ENCODE measurements at regions of chr22 and their contacts with region 1.

Region 1: DNA sequence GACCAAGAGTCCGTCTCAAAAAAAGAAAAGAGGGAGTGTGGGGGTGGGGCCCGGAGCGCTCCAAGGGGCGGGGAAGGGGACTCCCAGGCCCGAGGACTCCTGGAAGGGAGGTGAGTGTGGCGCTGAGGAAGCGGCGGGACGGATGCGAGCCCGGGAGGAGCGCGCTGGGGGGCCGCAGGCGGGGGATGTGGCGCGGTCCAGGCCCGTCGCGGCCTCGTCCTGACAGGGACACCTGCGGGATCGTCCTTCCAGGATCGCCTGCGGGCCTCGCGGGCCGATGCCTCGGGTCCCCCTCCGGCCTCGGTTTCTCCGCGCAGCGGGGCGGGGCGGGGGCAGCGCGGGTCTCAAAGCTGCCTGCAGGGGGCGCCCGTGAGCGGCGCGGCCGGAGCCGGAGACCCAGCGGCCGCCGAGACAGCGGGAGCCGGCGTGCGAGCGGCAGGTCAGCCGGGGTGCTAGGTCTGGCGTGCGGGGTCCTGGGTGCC is 3.8 kb upstream of the ADORA2A start:
- DNase-seq: peak in 1 of 2 donors; percentile 66
- ATAC-seq: peak; percentile 63

Region 2: GRCh38 chr22:24516301-24516737 is 92.8 kb after region 1 on chr22:
- intact Hi-C with region 1: loop called in 1 of 2 experiments (anchors 10 kb)
- DNase-seq: no peak
- ATAC-seq: no peak

Region 3: DNA sequence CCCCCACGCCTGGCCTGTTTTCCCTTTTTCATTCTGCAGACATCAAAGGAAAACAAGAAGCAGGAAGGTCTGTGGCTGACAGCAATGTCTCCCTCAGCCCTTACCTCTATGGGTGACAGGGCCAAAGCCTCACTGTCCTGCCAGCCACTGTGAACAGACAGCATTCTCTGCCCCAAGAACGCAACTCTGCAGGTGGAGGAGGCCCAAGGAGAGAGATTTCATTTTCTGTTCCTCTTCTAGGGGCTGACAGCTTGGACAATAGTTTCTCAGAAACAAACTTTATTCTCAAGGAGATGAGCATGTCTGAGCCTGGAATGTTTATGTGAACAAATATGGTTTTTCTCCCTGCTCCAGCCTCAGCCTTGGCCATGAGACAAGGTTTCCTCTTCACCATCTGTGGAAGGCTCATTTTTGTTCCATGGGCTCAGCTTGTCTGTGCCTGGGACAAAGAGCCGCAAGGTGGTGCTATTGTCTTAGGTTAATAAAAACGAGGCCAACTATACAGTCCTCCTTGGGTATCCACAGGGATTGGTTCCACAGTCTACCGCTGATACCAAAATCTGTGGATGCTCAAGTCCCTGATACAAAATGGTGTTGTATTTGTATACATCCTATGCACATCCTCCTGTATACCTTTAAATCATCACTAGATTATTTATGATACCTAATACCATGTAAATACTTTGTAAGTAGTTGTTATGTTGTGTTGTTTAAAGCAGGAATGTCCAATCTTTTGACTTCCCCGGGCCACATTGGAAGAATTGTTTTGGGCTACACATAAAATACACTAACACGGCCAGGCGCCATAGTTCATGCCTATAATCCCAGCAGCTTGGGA is 345.2 kb after region 1 on chr22:
- intact Hi-C with region 1: no loop called
- DNase-seq: peak; percentile 51 to 80
- ATAC-seq: peak; percentile 93

Measured in left colon (tissue), 2 donors.